ENCODE measurements at regions of chr17 and their contacts with region 1.

Region 1: GRCh38 chr17:76868176-76868668 is at the start of gene MGAT5B:
- DNase-seq: peak; percentile 68 to 83
- ATAC-seq: peak; percentile 89 to 98 (median 94)
- H3K4me3 ChIP-seq: peak within 1 kb of the TSS in 9 of 10 donors; percentile 18 to 36 (median 25)
- H3K27ac ChIP-seq: no peak within 1 kb of the TSS
- H3K4me1 ChIP-seq: peaks cover 0 to 19% (median 16%) of the 10 kb centered on the region in 9 donors
- H3K27me3 ChIP-seq: peaks cover 16 to 69% (median 64%) of the 10 kb centered on the region in 7 donors
- CTCF ChIP-seq: peak; percentile 69 to 96 (median 84)
- total RNA-seq, gene MGAT5B: 0.10 to 0.15 TPM in 2 of 10 donors, not detected in the others

Region 2: DNA sequence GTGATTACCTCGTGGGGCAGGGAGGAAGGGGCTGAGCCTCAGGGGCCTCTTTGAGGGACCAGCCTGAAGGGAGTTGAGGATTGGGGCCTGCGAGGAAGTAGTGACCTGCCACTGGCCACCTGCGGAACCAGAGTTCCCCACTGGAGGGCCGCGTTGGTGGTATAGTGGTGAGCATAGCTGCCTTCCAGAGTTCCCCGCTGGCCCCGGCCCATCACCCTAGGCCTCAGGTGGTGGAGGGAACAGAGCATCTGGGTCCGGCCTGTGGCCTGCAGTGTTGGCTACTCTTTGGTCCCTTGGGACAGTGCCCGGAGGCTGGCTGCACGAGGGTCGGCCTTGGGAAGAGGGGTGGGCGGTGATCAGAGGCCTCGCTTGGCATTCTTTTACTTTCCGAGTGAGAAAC is 20.4 kb after region 1 on chr17:
- intact Hi-C with region 1: no loop called
- DNase-seq: no peak
- ATAC-seq: no peak
- H3K4me3 ChIP-seq: no peak overlapping the region
- H3K27ac ChIP-seq: no peak overlapping the region
- H3K4me1 ChIP-seq: no peaks in the 10 kb centered on the region
- H3K27me3 ChIP-seq: peaks cover 0 to 50% (median 29%) of the 10 kb centered on the region in 7 donors
- CTCF ChIP-seq: no peak

Region 3: DNA sequence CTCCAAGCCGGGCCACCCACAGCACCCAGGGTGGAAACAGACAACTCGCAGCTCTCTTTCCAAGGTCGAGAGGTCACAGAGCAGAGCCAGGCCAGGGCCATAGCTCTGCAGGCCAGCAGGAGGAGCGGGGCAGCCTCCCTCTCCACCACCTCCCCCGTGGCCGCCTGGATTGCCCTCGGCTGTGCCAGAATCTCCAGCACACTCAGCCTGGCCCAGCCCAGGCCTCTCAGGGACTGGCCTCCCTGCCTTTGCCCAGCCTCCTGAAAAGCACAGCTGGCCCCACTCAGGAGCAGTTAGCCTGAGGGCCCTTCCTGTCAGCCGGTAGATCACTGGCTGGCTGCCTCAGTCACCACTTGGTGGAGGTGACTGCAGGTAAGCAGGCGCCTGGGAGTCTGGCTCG is 186.7 kb after region 1 on chr17:
- intact Hi-C with region 1: loop called (anchors 1 to 5 kb)
- DNase-seq: no peak
- ATAC-seq: no peak
- H3K4me3 ChIP-seq: no peak overlapping the region
- H3K27ac ChIP-seq: no peak overlapping the region
- H3K4me1 ChIP-seq: no peaks in the 10 kb centered on the region
- H3K27me3 ChIP-seq: peaks cover 0 to 90% (median 69%) of the 10 kb centered on the region in 7 donors
- CTCF ChIP-seq: no peak

Region 4: GRCh38 chr17:77068915-77069314 is 200.7 kb after region 1 on chr17:
- intact Hi-C with region 1: loop called in 2 of 10 experiments (anchors 2 to 5 kb)
- DNase-seq: no peak
- ATAC-seq: no peak
- H3K4me3 ChIP-seq: no peak overlapping the region
- H3K27ac ChIP-seq: no peak overlapping the region
- H3K4me1 ChIP-seq: peaks cover 0 to 3% (median 0%) of the 10 kb centered on the region in 9 donors
- H3K27me3 ChIP-seq: peaks cover 0 to 65% (median 37%) of the 10 kb centered on the region in 7 donors
- CTCF ChIP-seq: no peak

Region 5: GRCh38 chr17:77247048-77247541 is 378.9 kb after region 1 on chr17:
- intact Hi-C with region 1: loop called in 4 of 10 experiments (anchors 10 kb)
- DNase-seq: peak; percentile 81 to 90
- ATAC-seq: peak; percentile 86 to 94 (median 90)
- H3K4me3 ChIP-seq: peak overlapping the region; percentile 34 to 75 (median 64)
- H3K27ac ChIP-seq: peak overlapping the region in 9 of 10 donors; percentile 1 to 83 (median 63)
- H3K4me1 ChIP-seq: peaks cover 8 to 28% (median 12%) of the 10 kb centered on the region in 9 donors
- H3K27me3 ChIP-seq: peaks cover 0 to 22% (median 0%) of the 10 kb centered on the region in 7 donors
- CTCF ChIP-seq: peak; percentile 96 to 100 (median 99)

Region 6: GRCh38 chr17:77254951-77255825 is 387.0 kb after region 1 on chr17:
- intact Hi-C with region 1: loop called in 1 of 10 experiments (anchors 10 kb)
- DNase-seq: no peak
- ATAC-seq: peak in 6 of 8 donors; percentile 29 to 73 (median 44)
- H3K4me3 ChIP-seq: no peak overlapping the region
- H3K27ac ChIP-seq: no peak overlapping the region
- H3K4me1 ChIP-seq: peaks cover 0 to 6% (median 0%) of the 10 kb centered on the region in 9 donors
- H3K27me3 ChIP-seq: peaks cover 0 to 15% (median 4%) of the 10 kb centered on the region in 7 donors
- CTCF ChIP-seq: no peak

Measured in heart right ventricle (tissue), 16 donors.